HepG2 (cell line): ENCODE measurements at regions of chr17 and their contacts with region 1.

Region 1: DNA sequence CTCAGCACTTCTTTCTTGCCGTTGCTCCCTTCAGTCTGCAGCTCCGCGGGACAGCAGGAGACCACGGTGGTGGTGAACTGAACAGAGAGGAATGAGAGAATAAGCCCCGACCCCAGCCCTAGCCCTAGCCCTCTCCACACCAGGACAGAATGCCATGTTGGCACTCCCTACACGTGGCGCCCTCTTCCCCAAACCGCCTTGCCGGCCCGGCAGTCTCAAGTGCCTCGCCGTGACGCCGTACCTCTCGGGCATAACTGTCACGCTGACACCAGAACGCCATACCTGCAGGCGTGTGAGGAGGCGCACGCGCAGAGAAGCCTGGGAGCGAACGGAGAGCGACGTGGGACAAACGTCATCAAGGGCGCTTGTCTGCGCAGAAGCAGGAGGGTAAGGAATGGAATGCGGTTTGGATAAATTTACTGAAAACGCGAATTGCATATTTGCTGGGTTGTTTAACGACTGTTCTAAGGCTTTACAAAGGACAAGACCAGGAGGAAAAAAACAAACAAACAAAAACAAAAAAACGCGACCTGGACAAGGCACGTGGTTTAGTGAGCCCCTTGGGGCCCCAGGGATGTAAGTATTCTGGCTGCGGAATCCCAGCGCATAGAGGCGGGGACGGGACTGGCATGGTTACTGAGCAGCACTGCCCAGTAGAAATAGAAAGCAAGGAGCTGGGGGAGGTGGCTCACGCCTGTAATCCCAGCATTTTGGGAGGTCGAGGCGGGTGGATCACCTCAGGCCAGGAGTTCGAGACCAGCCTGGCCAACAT is at the start of gene AARSD1:
- DNase-seq: peak; percentile 70
- ATAC-seq: peak; percentile 83
- H3K4me3 ChIP-seq: peak within 1 kb of the TSS; percentile 60 to 72 (median 63)
- H3K27ac ChIP-seq: peak within 1 kb of the TSS; percentile 44
- H3K4me1 ChIP-seq: peaks cover 19% of the 10 kb centered on the region
- H3K27me3 ChIP-seq: no peaks in the 10 kb centered on the region
- CTCF ChIP-seq: 0 out of 2 replicates have a peak, but pooled peaks have one; percentile 14
- EP300 ChIP-seq: no peak
- POLR2A ChIP-seq: peak; percentile 51 to 74
- RAD21 ChIP-seq: no peak
- total RNA-seq, gene AARSD1: 24.7 and 29.8 TPM in 2 replicates

Region 2: DNA sequence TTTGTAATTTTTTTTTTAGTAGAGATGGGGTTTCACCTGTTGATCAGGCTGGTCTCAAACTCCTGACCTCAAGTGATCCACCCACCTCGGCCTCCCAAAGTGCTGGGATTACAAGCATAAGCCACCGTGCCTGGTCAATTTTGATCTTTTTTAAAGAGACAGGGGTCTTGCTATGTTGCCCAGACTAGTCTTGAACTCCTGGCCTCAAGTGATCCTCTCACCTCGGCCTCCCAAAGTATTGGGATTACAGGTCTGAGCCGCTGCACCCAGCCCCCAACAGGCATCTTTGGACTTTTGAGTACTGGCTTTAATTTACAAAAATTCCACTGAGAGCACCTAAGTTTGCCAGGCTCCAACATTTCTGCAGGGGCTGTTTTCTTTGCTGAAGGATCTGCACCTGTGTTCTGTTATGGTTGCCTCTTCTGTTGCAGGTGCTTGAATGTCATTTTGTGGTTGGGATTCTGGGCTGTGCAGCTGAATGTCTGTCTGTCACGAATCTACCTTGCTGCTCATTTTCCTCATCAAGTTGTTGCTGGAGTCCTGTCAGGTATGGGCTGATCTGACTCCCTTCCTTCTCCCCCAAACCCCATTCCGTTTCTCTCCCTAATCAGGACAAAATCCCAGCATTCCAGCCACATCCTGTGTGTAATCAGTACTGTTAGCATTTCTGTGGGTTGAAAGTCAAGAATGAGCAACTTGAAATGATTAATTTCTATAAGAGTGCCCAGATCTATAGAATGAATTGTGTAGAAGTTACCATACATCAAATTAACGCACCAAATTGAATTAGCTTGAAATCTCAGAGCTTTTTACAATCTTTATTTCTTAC is 55.3 kb before region 1 on chr17:
- CTCF ChIA-PET with region 1: no interaction called
- POLR2A ChIA-PET with region 1: no interaction called
- in situ Hi-C with region 1: loop called (anchors 10 kb)
- intact Hi-C with region 1: no loop called
- DNase-seq: no peak
- ATAC-seq: no peak
- H3K4me3 ChIP-seq: no peak overlapping the region
- H3K27ac ChIP-seq: peak overlapping the region; percentile 3
- H3K4me1 ChIP-seq: peaks cover 42% of the 10 kb centered on the region
- H3K27me3 ChIP-seq: no peaks in the 10 kb centered on the region; a peak in 1 of 5 replicates
- CTCF ChIP-seq: no peak
- EP300 ChIP-seq: no peak
- POLR2A ChIP-seq: no peak
- RAD21 ChIP-seq: no peak

Region 3: GRCh38 chr17:43018008-43018853 is 53.9 kb after region 1 on chr17:
- CTCF ChIA-PET with region 1: no interaction called
- POLR2A ChIA-PET with region 1: no interaction called
- in situ Hi-C with region 1: no loop called
- intact Hi-C with region 1: no loop called
- DNase-seq: no peak
- ATAC-seq: no peak
- H3K4me3 ChIP-seq: no peak overlapping the region
- H3K27ac ChIP-seq: no peak overlapping the region
- H3K4me1 ChIP-seq: peaks cover 62% of the 10 kb centered on the region
- H3K27me3 ChIP-seq: no peaks in the 10 kb centered on the region; a peak in 1 of 5 replicates
- CTCF ChIP-seq: no peak
- EP300 ChIP-seq: no peak
- POLR2A ChIP-seq: no peak
- RAD21 ChIP-seq: no peak